Pancreas (tissue), 10 donors: ENCODE measurements at regions of chr10 and their contacts with region 1.

Region 1: DNA sequence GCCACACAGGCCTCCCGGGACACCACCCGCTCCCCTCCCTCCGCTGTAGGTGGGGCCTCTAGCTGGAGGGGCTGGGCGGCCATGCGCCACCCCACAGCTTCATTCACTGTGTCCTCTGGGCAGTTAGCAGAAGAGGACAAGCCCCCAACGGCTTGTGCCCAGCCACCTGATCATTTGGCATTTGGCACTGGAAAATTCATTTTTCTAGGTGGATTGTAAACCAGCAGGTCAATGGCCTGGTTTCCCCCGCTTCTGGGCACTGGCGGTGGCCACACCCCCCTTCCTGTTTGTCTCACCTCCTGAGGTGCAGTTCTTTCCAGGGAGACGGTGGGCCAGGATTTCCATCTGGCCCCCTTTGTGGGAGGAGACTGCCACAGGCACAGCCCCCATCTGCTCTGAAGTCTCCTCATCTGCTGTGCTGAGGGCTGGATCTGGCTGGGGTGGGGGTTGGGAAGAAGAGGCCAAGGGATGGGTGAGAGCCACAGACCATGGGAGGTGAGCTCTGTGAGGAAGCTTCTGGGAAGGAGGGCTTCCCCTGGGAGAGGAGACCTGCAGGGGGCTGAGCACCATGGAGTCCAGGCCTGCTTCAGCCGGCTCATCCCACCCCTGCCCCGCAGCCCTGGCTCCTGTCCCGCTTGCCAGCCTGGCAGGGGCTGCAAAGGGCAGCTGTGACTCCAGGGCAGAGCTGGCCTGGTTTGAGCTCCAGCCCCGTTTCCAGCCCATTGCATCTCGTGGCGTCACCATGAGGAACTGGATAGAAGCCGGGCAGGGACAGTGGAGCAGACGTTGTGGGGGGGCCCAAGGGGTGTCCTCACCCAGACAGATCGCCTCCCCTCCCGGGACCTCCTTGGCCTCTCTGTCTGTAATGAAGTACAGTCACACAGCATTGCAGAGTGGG is 40.1 kb upstream of the SLC29A3 start:
- DNase-seq: peak in 1 of 6 donors; percentile 54
- ATAC-seq: peak in 2 of 4 donors; percentile 45 to 56
- H3K4me3 ChIP-seq: no peak overlapping the region
- H3K27ac ChIP-seq: no peak overlapping the region
- H3K4me1 ChIP-seq: no peaks in the 10 kb centered on the region
- H3K27me3 ChIP-seq: no peaks in the 10 kb centered on the region
- CTCF ChIP-seq: no peak

Region 2: GRCh38 chr10:70906953-70907636 is 371.8 kb before region 1 on chr10:
- intact Hi-C with region 1: loop called in 1 of 3 experiments (anchors 5 kb)
- DNase-seq: peak in 2 of 6 donors; percentile 20 to 27
- ATAC-seq: no peak
- H3K4me3 ChIP-seq: no peak overlapping the region
- H3K27ac ChIP-seq: no peak overlapping the region
- H3K4me1 ChIP-seq: no peaks in the 10 kb centered on the region
- H3K27me3 ChIP-seq: no peaks in the 10 kb centered on the region
- CTCF ChIP-seq: no peak